Endothelial cell of umbilical vein (primary cell): ENCODE measurements at regions of chr15 and their contacts with region 1.

Region 1: GRCh38 chr15:64841258-64842095 is at the start of gene PLEKHO2:
- DNase-seq: peak; percentile 93
- H3K4me3 ChIP-seq: peak within 1 kb of the TSS; percentile 26 to 97 (median 62)
- H3K27ac ChIP-seq: peak within 1 kb of the TSS; percentile 57
- H3K4me1 ChIP-seq: peaks cover 41% of the 10 kb centered on the region
- H3K27me3 ChIP-seq: no peaks in the 10 kb centered on the region
- CTCF ChIP-seq: peak in 1 of 2 donors; percentile 41
- POLR2A ChIP-seq: peak; percentile 94
- total RNA-seq, gene PLEKHO2: 20.7 and 24.9 TPM in 2 replicates

Region 2: GRCh38 chr15:64825431-64826294 is 15.8 kb before region 1 on chr15 and contains the start of gene PIF1:
- CTCF ChIA-PET with region 1: no interaction called
- POLR2A ChIA-PET with region 1: interaction called, 6 read pairs
- dilution Hi-C with region 1: no loop called
- intact Hi-C with region 1: loop called (anchors 1 kb)
- DNase-seq: peak; percentile 97
- H3K4me3 ChIP-seq: peak within 1 kb of the TSS; percentile 46 to 84 (median 73)
- H3K27ac ChIP-seq: peak within 1 kb of the TSS; percentile 48
- H3K4me1 ChIP-seq: peaks cover 15% of the 10 kb centered on the region
- H3K27me3 ChIP-seq: no peaks in the 10 kb centered on the region
- CTCF ChIP-seq: peak in 1 of 2 donors; percentile 4
- POLR2A ChIP-seq: peak; percentile 67
- total RNA-seq, gene PIF1: 45.4 and 52.7 TPM in 2 replicates

Region 3: GRCh38 chr15:64856429-64857145 is 15.1 kb after region 1 on chr15:
- CTCF ChIA-PET with region 1: interaction called, 5 read pairs
- POLR2A ChIA-PET with region 1: interaction called, 3 read pairs
- dilution Hi-C with region 1: no loop called
- intact Hi-C with region 1: loop called (anchors 2 kb)
- DNase-seq: peak; percentile 57
- H3K4me3 ChIP-seq: no peak overlapping the region
- H3K27ac ChIP-seq: peak overlapping the region; percentile 38
- H3K4me1 ChIP-seq: peaks cover 29% of the 10 kb centered on the region
- H3K27me3 ChIP-seq: no peaks in the 10 kb centered on the region
- CTCF ChIP-seq: no peak
- POLR2A ChIP-seq: no peak

Region 4: DNA sequence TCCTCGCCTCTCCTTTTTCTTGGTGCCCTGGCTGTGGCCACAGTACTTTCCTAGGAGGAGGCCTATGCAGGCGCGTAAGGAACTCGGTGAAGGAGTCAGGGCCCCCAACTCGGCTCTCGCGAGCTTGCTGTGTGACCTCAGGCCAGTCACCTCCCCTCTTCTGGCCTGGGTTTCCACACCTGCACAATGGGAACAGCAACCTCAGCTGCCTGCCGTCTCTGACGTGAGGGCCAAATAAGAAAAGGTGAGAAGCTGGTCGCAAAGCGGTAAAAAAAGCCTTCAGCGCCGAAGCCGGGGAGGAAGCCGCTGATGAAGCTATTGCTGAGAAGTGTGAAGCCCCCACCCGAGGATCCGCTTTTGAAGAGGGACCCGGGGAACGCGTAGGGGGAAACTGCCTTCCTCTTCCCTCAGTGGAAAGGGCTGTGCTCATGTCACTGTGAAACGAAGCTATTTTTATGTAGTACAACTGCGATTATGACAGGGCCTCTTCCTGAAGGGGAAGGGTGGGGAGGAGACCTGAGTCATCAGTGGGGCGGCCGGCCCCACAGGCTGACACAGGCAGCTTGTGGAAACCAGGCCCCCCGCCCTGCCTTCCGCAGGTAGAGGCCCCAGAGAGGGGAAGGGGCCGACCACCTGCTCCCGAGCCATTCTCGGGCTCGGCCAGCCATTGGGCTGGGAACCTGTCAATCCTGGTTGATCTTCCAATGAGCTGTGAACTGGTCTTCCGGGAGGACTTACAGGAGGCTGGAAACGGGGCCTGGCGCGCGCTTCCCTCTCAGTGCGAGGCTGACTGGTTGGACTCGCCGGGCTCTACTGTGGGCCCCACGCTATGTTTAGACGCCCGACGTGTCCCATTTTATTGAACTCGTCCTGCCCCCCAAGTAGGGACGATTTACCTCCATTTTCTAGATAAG is 52.3 kb after region 1 on chr15:
- CTCF ChIA-PET with region 1: interaction called, 9 read pairs
- POLR2A ChIA-PET with region 1: interaction called, 4 read pairs
- dilution Hi-C with region 1: no loop called
- intact Hi-C with region 1: loop called (anchors 1 kb)
- DNase-seq: peak; percentile 98
- H3K4me3 ChIP-seq: peak overlapping the region in 2 of 3 experiments; percentile 20 to 24
- H3K27ac ChIP-seq: peak overlapping the region; percentile 72
- H3K4me1 ChIP-seq: peaks cover 44% of the 10 kb centered on the region
- H3K27me3 ChIP-seq: no peaks in the 10 kb centered on the region
- CTCF ChIP-seq: no peak
- POLR2A ChIP-seq: peak; percentile 69

Region 5: DNA sequence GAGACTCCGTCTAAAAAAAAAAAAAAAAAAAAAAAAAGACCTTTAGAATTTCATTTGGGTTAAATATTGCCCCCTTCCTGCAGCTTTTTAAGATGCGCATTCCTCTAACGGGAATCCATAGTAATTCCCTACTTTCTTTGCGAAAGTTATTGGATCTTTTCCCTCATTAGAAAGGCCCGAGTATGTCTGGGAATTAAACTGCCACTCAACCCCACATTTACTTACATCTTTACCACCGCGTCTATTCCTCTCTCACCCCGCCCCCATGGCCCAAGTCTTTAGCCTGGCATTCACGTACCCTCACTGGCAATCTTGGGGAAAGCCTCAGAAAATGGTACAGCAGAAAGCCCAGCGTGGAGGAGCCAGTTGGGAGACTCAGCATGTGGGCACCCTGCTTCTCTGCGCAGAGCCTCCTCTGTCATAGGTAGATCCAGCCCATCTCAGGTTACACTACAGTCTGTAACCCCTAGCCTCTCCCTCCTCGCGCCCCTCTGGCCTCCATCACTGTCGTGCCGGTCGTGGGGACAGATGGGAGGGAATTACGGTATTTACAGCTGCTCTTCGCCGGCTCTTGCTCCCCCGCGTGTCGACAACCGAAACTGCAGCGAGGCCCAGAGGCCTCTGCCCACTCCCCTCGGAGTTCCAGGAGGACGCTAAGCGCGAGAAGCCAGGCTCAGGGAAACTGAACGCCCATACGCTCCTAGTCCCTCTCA is 63.8 kb after region 1 on chr15:
- CTCF ChIA-PET with region 1: interaction called, 9 read pairs
- POLR2A ChIA-PET with region 1: interaction called, 3 read pairs
- dilution Hi-C with region 1: no loop called
- intact Hi-C with region 1: loop called (anchors 1 kb)
- DNase-seq: peak; percentile 79
- H3K4me3 ChIP-seq: peak overlapping the region; percentile 21 to 48 (median 35)
- H3K27ac ChIP-seq: no peak overlapping the region
- H3K4me1 ChIP-seq: peaks cover 11% of the 10 kb centered on the region
- H3K27me3 ChIP-seq: no peaks in the 10 kb centered on the region
- CTCF ChIP-seq: peak; percentile 89 to 92
- POLR2A ChIP-seq: no peak

Region 6: DNA sequence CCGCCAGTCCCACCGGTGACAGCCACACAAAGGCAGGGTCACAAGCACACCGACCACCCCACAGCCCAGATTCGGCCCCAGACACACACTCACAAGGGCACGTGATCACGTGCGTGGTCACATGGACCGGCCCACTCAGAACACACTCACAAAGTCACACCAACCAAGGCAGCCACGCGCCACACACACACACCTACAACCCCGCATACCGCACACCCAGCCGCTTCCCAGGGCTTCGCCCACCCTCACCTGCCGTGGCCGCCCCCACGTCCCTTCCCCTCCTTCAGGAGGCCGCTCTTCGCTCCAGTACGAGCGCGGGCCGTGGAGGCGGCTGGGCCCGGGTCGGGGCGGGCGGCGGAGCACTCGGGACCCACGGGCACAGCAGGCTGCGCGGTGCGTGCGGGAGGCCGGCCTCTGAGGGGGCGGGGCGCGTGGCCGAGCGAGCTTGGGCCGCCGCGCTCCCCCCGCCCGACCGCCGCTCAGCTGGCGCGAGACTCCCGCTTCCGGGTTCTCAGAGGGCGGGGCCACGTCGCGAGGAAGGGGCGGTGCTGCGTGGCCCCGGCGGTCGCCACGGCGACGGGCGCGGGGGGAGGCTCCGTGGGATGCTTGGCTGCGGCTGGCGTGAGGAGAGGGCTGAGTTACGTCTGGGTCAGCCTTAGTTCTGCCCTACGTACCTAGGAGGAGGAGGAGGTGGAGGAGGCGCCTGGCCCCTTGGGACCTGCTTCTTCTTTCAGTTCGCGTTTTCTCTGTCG is 148.1 kb after region 1 on chr15 and contains the start of gene SPG21:
- CTCF ChIA-PET with region 1: no interaction called
- POLR2A ChIA-PET with region 1: no interaction called
- dilution Hi-C with region 1: no loop called
- intact Hi-C with region 1: loop called (anchors 5 kb)
- DNase-seq: peak; percentile 97
- H3K4me3 ChIP-seq: peak within 1 kb of the TSS; percentile 93 to 99 (median 94)
- H3K27ac ChIP-seq: peak within 1 kb of the TSS; percentile 97
- H3K4me1 ChIP-seq: peaks cover 27% of the 10 kb centered on the region
- H3K27me3 ChIP-seq: no peaks in the 10 kb centered on the region
- CTCF ChIP-seq: no peak
- POLR2A ChIP-seq: peak; percentile 89
- total RNA-seq, gene SPG21: 75.3 and 82.5 TPM in 2 replicates